AG04450 (cell line): ENCODE measurements at regions of chr1 and their contacts with region 1.

Region 1: DNA sequence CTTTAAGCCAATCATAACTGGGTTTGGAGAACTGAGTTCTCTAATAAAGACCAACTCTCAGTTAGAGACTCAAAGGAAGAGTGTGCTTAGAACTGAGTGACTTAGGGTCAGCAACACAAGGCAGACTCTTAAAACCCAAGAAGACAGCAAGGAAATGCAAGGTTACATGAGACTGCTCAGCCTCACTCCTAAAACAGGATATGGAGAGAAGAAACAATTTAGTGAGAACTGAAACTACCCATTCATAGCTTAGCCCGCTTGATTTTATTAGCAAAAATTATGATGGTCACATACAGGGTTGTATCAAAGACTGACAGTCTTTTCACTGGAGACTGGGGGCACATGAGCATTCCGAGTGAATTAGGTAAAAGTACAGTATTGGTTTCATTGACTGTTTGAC is 78.9 kb upstream of the DMRTA2 start:
- DNase-seq: no peak
- H3K4me3 ChIP-seq: no peak overlapping the region
- H3K27ac ChIP-seq: no peak overlapping the region
- H3K27me3 ChIP-seq: no peaks in the 10 kb centered on the region
- CTCF ChIP-seq: no peak

Region 2: GRCh38 chr1:50358962-50359361 is 143.2 kb before region 1 on chr1:
- CTCF ChIA-PET with region 1: no interaction called
- POLR2A ChIA-PET with region 1: no interaction called
- DNase-seq: no peak
- H3K4me3 ChIP-seq: no peak overlapping the region
- H3K27ac ChIP-seq: no peak overlapping the region
- H3K27me3 ChIP-seq: no peaks in the 10 kb centered on the region
- CTCF ChIP-seq: no peak

Region 3: GRCh38 chr1:50462964-50463363 is 39.2 kb before region 1 on chr1:
- CTCF ChIA-PET with region 1: no interaction called
- POLR2A ChIA-PET with region 1: interaction called, 12 read pairs
- DNase-seq: no peak
- H3K4me3 ChIP-seq: no peak overlapping the region
- H3K27ac ChIP-seq: no peak overlapping the region
- H3K27me3 ChIP-seq: no peaks in the 10 kb centered on the region
- CTCF ChIP-seq: no peak

Region 4: GRCh38 chr1:50591598-50591997 is 89.5 kb after region 1 on chr1:
- CTCF ChIA-PET with region 1: no interaction called
- POLR2A ChIA-PET with region 1: no interaction called
- DNase-seq: no peak
- H3K4me3 ChIP-seq: no peak overlapping the region
- H3K27ac ChIP-seq: no peak overlapping the region
- H3K27me3 ChIP-seq: no peaks in the 10 kb centered on the region
- CTCF ChIP-seq: no peak